ENCODE measurements at regions of chr10 and their contacts with region 1.

Region 1: DNA sequence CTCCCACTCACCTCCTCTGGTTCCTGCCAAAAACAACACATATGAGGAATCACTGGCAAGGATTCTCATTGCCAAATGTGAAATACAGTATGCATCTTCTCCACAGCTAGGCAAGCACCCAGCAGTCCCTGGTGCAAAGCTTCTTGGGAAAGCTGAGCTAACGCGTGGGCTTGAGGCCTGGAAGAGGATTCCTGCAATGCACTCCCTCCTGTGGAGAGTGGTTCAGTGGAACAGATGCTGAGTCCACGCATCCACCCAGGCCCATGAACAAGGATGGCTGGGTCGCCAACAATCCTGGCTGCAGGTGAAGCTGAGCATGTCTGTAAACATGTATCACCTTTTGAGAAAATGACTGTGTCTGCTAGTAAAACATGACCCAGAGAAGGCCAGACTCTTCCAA is 113.2 kb upstream of the CHST15 start:
- DNase-seq: no peak
- H3K4me3 ChIP-seq: no peak overlapping the region
- H3K27ac ChIP-seq: no peak overlapping the region
- H3K4me1 ChIP-seq: no peaks in the 10 kb centered on the region
- H3K27me3 ChIP-seq: no peaks in the 10 kb centered on the region
- CTCF ChIP-seq: no peak

Region 2: DNA sequence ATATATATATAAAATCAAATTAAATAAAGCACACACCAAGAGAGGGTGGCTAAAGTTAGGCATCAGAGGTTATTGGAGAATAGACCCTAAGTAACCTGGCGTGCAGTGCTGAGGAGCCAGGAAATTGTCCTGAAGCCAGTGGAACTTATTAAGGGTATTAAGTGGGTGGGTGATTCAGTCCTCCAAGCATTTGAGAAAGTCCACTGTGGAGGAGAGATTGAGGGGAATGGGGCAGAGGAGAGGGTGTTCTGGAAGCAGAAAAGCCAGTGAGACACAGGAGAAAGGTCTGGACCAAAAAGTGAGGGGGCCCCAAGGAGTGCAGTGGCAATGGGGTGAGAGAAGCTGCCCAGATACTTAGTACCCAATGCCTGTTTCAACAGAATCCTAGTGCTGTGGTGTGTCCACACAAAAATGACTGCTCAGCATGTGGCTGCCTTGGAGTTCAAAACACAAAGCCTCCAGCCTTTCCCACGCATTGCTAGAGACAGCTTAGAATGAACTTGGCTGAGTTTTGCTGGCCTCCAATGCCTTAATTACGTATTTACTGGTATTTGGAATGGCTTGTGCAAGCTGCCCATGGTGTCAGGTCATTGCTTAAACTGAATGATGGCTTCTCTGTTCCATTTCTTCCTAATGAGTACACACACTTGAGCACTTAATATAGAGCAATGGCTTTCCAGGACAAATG is 68.3 kb before region 1 on chr10:
- CTCF ChIA-PET with region 1: no interaction called
- dilution Hi-C with region 1: loop called (anchors 5 kb)
- in situ Hi-C with region 1: no loop called
- intact Hi-C with region 1: no loop called
- DNase-seq: no peak
- H3K4me3 ChIP-seq: no peak overlapping the region
- H3K27ac ChIP-seq: no peak overlapping the region
- H3K4me1 ChIP-seq: no peaks in the 10 kb centered on the region
- H3K27me3 ChIP-seq: no peaks in the 10 kb centered on the region
- CTCF ChIP-seq: no peak

Region 3: GRCh38 chr10:124259139-124259825 is 52.7 kb after region 1 on chr10:
- CTCF ChIA-PET with region 1: no interaction called
- dilution Hi-C with region 1: no loop called
- in situ Hi-C with region 1: no loop called
- intact Hi-C with region 1: no loop called
- DNase-seq: no peak
- H3K4me3 ChIP-seq: no peak overlapping the region
- H3K27ac ChIP-seq: no peak overlapping the region
- H3K4me1 ChIP-seq: no peaks in the 10 kb centered on the region
- H3K27me3 ChIP-seq: peaks cover 3% of the 10 kb centered on the region
- CTCF ChIP-seq: peak; percentile 4 to 33

Region 4: GRCh38 chr10:124403548-124403947 is 196.9 kb after region 1 on chr10:
- CTCF ChIA-PET with region 1: no interaction called
- dilution Hi-C with region 1: no loop called
- in situ Hi-C with region 1: no loop called
- intact Hi-C with region 1: no loop called
- DNase-seq: peak; percentile 71
- H3K4me3 ChIP-seq: no peak overlapping the region
- H3K27ac ChIP-seq: no peak overlapping the region
- H3K4me1 ChIP-seq: no peaks in the 10 kb centered on the region
- H3K27me3 ChIP-seq: no peaks in the 10 kb centered on the region
- CTCF ChIP-seq: peak; percentile 61 to 64

Region 5: GRCh38 chr10:124418726-124419501 is 212.3 kb after region 1 on chr10 and contains the start of gene OAT:
- CTCF ChIA-PET with region 1: no interaction called
- dilution Hi-C with region 1: no loop called
- in situ Hi-C with region 1: no loop called
- intact Hi-C with region 1: no loop called
- DNase-seq: peak; percentile 95
- H3K4me3 ChIP-seq: peak within 1 kb of the TSS; percentile 64 to 79 (median 75)
- H3K27ac ChIP-seq: peak within 1 kb of the TSS; percentile 70
- H3K4me1 ChIP-seq: peaks cover 29% of the 10 kb centered on the region
- H3K27me3 ChIP-seq: no peaks in the 10 kb centered on the region
- CTCF ChIP-seq: peak; percentile 7 to 30
- total RNA-seq, gene OAT: 204 to 225 TPM

Measured in mammary epithelial cell (primary cell).